ENCODE measurements at regions of chr11 and their contacts with region 1.

Region 1: GRCh38 chr11:9619753-9620365 is 44.0 kb upstream of the SWAP70 start:
- DNase-seq: no peak
- ATAC-seq: no peak
- H3K4me3 ChIP-seq: no peak overlapping the region
- H3K27ac ChIP-seq: no peak overlapping the region
- H3K4me1 ChIP-seq: peaks cover 5 to 9% of the 10 kb centered on the region in 2 experiments; a peak in 2 of 5 replicates
- H3K27me3 ChIP-seq: no peaks in the 10 kb centered on the region
- CTCF ChIP-seq: no peak
- EP300 ChIP-seq: no peak
- POLR2A ChIP-seq: no peak
- RAD21 ChIP-seq: no peak

Region 2: GRCh38 chr11:9565822-9566560 is 53.9 kb before region 1 on chr11:
- CTCF ChIA-PET with region 1: no interaction called
- POLR2A ChIA-PET with region 1: no interaction called
- in situ Hi-C with region 1: no loop called
- intact Hi-C with region 1: no loop called
- DNase-seq: peak; percentile 80 to 97 (median 86)
- ATAC-seq: peak; percentile 94
- H3K4me3 ChIP-seq: no peak overlapping the region
- H3K27ac ChIP-seq: peak overlapping the region; percentile 98
- H3K4me1 ChIP-seq: peaks cover 12 to 44% of the 10 kb centered on the region in 2 experiments
- H3K27me3 ChIP-seq: no peaks in the 10 kb centered on the region
- CTCF ChIP-seq: no peak
- EP300 ChIP-seq: peak; percentile 95
- POLR2A ChIP-seq: peak; percentile 67
- RAD21 ChIP-seq: 0 out of 4 replicates have a peak, but pooled peaks have one; percentile 11 to 12

Region 3: GRCh38 chr11:10134975-10135481 is 515.2 kb after region 1 on chr11:
- CTCF ChIA-PET with region 1: no interaction called
- POLR2A ChIA-PET with region 1: no interaction called
- in situ Hi-C with region 1: loop called (anchors 5 kb)
- intact Hi-C with region 1: no loop called
- DNase-seq: no peak
- ATAC-seq: no peak
- H3K4me3 ChIP-seq: no peak overlapping the region
- H3K27ac ChIP-seq: no peak overlapping the region
- H3K4me1 ChIP-seq: no peaks in the 10 kb centered on the region
- H3K27me3 ChIP-seq: no peaks in the 10 kb centered on the region
- CTCF ChIP-seq: no peak
- EP300 ChIP-seq: no peak
- POLR2A ChIP-seq: no peak
- RAD21 ChIP-seq: no peak

Measured in K562 (cell line).